CD8-positive, alpha-beta T cell (primary cell): ENCODE measurements at regions of chr3 and their contacts with region 1.

Region 1: DNA sequence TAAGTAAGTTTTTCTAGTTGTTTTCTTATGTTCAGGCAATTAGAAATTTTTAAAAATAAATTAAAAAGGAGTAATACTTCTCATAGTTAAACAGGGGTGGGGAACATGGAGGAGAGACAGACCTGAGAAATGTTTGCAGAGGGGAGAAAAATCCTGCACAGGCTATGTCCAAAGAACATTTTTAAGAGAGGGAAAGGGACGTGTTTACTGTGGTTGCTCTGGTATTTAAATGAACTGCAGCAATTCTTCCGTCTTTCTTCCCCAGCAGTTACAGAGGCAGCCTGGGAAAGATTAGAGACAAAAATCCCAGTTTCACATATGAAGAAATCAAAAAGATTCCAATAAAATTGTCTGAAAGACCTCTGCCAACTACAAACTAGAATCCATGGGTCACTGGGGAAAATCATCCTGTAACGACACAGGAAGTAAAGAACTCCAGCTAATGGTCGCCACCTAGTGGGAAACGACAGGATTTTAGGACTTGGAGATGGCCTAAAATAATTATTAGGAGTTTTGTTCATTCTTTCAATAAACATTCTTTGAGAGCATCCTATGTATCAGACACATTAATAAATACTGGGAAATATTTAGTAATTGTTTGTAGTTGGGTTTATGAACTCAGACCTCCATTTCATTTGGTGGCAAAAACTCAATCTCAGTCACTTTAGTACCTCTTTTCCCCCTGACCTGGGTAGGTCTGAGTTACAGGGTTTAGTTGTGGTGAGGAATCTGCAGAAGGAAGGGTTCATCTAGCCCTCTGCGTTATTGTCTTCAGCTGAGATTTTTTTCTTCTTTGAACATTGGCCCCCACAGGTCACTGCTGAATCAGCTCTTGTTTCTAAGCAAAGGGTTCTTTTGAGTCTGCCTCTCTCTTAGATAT is 69.9 kb upstream of the GOLIM4 start:
- DNase-seq: peak in 3 of 9 experiments; percentile 11 to 67 (median 44)
- ATAC-seq: no peak
- H3K4me3 ChIP-seq: no peak overlapping the region
- H3K4me3 Mint-ChIP-seq: no peak overlapping the region
- H3K27ac ChIP-seq: no peak overlapping the region
- H3K27ac Mint-ChIP-seq: no peak overlapping the region
- H3K4me1 ChIP-seq: no peaks in the 10 kb centered on the region
- H3K4me1 Mint-ChIP-seq: no peaks in the 10 kb centered on the region
- H3K27me3 ChIP-seq: no peaks in the 10 kb centered on the region
- H3K27me3 Mint-ChIP-seq: no peaks in the 10 kb centered on the region
- CTCF ChIP-seq: no peak

Region 2: GRCh38 chr3:167901122-167901521 is 264.5 kb before region 1 on chr3:
- CTCF ChIA-PET with region 1: no interaction called
- POLR2A ChIA-PET with region 1: no interaction called
- intact Hi-C with region 1: no loop called
- DNase-seq: no peak
- ATAC-seq: no peak
- H3K4me3 ChIP-seq: no peak overlapping the region
- H3K4me3 Mint-ChIP-seq: no peak overlapping the region
- H3K27ac ChIP-seq: no peak overlapping the region
- H3K27ac Mint-ChIP-seq: no peak overlapping the region
- H3K4me1 ChIP-seq: no peaks in the 10 kb centered on the region
- H3K4me1 Mint-ChIP-seq: no peaks in the 10 kb centered on the region
- H3K27me3 ChIP-seq: no peaks in the 10 kb centered on the region
- H3K27me3 Mint-ChIP-seq: no peaks in the 10 kb centered on the region
- CTCF ChIP-seq: no peak

Region 3: GRCh38 chr3:168047190-168047795 is 118.3 kb before region 1 on chr3:
- CTCF ChIA-PET with region 1: interaction called, 10 read pairs
- POLR2A ChIA-PET with region 1: no interaction called
- intact Hi-C with region 1: loop called in 1 of 2 experiments (anchors 5 kb)
- DNase-seq: peak in 2 of 9 experiments; percentile 42 to 69
- ATAC-seq: peak; percentile 51
- H3K4me3 ChIP-seq: no peak overlapping the region
- H3K4me3 Mint-ChIP-seq: no peak overlapping the region
- H3K27ac ChIP-seq: no peak overlapping the region
- H3K27ac Mint-ChIP-seq: no peak overlapping the region
- H3K4me1 ChIP-seq: no peaks in the 10 kb centered on the region
- H3K4me1 Mint-ChIP-seq: no peaks in the 10 kb centered on the region
- H3K27me3 ChIP-seq: no peaks in the 10 kb centered on the region
- H3K27me3 Mint-ChIP-seq: no peaks in the 10 kb centered on the region
- CTCF ChIP-seq: peak; percentile 46

Region 4: DNA sequence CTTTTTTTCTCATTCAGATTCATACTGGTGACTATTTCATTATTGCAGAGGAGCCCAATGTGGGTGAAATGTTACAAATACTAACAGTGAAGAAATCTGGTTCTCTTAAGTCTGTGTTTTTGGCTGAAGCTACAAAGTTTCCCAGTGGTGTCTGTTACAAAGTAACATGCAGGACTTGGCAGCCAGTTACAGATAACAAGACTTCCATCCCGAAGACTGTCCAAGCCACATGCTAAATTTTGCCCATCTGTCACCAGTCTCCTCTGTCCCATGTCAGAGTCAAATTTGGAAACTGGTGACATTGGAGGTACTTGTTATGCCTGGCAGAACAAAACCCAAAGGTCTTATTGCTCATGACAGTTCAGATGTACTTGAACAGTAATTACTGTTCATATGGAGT is 199.3 kb after region 1 on chr3:
- CTCF ChIA-PET with region 1: no interaction called
- POLR2A ChIA-PET with region 1: no interaction called
- intact Hi-C with region 1: no loop called
- DNase-seq: no peak
- ATAC-seq: no peak
- H3K4me3 ChIP-seq: no peak overlapping the region
- H3K4me3 Mint-ChIP-seq: no peak overlapping the region
- H3K27ac ChIP-seq: no peak overlapping the region
- H3K27ac Mint-ChIP-seq: no peak overlapping the region
- H3K4me1 ChIP-seq: no peaks in the 10 kb centered on the region
- H3K4me1 Mint-ChIP-seq: no peaks in the 10 kb centered on the region
- H3K27me3 ChIP-seq: no peaks in the 10 kb centered on the region
- H3K27me3 Mint-ChIP-seq: no peaks in the 10 kb centered on the region
- CTCF ChIP-seq: no peak